GM10248 (cell line): ENCODE measurements at regions of chr4 and their contacts with region 1.

Region 1: GRCh38 chr4:6873792-6874461 is 35.7 kb upstream of the TBC1D14 start:
- DNase-seq: peak; percentile 76
- CTCF ChIP-seq: peak; percentile 87

Region 2: DNA sequence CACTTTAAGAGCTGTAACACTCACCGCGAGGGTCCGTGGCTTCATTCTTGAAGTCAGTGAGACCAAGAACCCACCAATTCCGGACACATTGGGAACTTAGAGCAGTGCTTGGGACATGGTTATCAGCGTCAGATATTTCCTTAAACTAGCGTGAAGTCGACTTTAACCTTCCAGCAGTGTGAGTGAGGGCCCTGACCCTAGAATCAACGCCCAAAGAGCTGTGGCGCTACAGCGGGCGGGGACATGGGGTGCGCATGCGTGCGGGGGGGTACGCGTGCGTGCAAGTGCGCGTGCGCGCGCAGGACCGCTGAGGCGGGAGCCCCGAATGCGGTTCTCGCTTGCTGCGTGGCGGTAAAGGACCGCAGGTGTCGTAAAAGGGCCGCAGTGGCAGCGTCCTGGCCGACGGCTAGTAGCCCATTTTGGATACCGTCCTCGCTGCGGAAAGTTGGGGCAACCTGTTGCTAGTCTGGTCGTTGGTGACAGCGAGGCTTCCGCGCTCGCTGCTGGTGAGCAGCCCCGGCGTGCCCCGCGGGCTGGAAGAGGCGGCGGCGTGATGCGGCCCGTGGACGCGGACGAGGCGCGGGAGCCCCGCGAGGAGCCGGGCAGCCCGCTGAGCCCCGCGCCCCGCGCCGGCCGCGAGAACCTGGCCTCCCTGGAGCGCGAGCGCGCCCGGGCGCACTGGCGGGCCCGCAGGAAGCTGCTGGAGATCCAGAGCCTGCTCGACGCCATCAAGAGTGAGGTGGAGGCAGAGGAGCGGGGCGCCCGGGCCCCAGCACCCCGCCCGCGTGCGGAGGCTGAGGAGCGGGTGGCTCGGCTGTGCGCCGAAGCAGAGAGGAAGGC is 200.0 kb before region 1 on chr4:
- CTCF ChIA-PET with region 1: interaction called, 26 read pairs
- POLR2A ChIA-PET with region 1: no interaction called
- DNase-seq: peak; percentile 97
- CTCF ChIP-seq: no peak

Region 3: DNA sequence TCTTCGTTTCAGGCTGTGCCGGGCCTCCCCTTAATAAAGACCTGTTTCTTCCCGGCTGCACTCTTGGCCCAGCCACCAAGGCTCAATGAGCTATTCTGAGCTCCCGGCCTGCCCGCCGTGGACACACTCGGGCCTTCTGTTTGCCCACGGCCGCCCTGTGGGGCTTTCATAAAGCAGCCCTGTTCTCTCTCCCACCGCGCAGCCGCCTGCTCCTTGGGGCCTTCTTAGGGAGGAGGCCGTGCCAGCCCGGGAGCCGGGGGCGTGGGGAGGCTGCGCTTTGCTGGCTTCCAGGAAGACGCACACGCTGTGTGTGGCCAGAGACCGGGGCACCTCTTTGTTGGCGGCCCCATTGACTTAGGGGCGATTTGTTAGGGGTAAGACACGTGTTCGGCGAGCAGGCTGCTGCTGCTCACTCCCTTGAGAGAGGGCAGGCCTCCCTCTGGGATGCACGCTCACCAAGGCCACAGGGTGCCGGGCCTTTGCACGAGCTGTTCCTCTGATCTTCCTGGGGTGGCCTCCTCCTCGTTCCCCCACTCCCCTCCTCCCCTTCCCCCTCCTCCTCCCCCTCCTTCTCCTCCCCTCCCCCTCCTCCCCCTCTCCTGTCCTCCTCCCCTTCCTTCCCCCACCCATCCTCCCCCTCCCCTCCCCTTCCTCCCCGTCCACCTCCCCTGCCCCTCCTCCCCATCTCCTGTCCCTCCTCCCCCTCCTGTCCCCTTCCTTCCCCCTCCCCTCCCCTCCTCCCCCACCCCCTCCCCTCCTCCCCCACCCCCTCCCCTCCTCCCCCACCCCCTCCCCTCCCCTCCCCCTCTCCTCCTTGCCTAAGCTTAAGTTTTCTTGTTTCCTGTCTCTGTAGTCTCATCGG is 146.6 kb before region 1 on chr4:
- CTCF ChIA-PET with region 1: interaction called, 42 read pairs
- POLR2A ChIA-PET with region 1: no interaction called
- DNase-seq: no peak
- CTCF ChIP-seq: no peak

Region 4: DNA sequence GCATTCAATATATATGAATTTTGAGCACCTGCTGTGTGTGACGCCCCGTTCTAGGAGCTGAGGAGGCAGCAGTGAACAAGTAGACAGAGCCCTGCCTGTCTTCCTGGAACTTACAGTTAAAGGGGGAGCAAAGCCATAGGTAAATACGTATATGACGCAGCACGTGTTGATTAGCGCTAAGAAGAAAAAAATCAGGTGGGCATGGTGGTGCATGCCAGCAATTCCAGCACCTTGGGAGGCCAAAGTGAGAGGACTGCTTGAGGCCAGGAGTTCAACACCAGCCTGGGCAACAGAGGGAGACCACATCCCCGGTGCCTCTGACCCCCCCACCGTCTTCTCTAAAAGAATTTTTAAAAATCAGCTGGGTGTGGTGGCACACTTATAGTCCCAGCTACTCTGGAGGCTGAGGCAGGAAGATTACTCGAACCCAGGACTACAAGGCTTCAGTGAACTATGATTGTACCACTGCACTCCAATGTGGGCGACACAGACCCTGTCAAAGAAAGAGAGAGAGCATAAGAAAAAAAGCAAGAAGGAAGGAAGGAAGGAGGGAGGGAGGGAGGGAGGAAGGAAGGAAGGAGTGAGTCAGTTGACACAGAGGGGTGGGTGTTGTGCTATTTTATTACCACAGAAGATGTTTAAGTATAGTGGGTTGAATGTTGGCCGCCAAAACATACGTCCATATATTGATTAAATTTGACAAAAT is 96.8 kb before region 1 on chr4:
- CTCF ChIA-PET with region 1: interaction called, 35 read pairs
- POLR2A ChIA-PET with region 1: no interaction called
- DNase-seq: no peak
- CTCF ChIP-seq: no peak

Region 5: DNA sequence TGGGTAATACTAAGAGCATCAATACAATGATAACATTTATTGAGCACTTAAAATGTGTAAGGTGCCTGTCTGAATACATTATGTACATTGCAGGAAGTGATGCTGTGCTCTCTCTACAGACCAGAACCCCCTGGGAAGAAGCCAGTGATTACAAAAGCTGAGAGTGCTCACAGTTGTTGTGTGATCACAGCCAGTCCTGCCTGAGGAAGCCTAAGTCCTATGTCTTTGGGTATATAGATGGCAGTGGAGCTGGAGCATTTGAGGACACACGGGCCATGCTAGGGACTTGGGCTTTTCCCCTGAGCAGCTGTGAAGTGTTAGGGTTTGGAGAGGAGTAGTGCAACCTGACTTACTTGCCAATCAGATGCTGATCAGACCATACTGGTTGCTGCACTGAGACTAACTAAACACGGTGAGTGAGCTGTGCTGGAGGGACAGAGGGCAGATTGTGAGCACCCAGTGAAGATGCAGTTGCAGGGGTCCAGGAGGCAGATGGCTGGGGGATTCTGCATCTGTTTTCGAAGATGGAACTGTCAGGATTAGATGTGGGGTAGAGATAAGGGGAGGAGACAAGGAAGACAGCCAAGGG is 25.1 kb before region 1 on chr4:
- CTCF ChIA-PET with region 1: interaction called, 22 read pairs
- POLR2A ChIA-PET with region 1: no interaction called
- DNase-seq: no peak
- CTCF ChIP-seq: no peak

Region 6: GRCh38 chr4:6902318-6903042 is 28.6 kb after region 1 on chr4:
- CTCF ChIA-PET with region 1: interaction called, 19 read pairs
- POLR2A ChIA-PET with region 1: no interaction called
- DNase-seq: no peak
- CTCF ChIP-seq: no peak

Region 7: GRCh38 chr4:7067452-7068278 is 193.7 kb after region 1 on chr4 and contains the start of gene GRPEL1:
- CTCF ChIA-PET with region 1: interaction called, 23 read pairs
- POLR2A ChIA-PET with region 1: no interaction called
- DNase-seq: peak; percentile 98
- CTCF ChIP-seq: no peak

Region 8: DNA sequence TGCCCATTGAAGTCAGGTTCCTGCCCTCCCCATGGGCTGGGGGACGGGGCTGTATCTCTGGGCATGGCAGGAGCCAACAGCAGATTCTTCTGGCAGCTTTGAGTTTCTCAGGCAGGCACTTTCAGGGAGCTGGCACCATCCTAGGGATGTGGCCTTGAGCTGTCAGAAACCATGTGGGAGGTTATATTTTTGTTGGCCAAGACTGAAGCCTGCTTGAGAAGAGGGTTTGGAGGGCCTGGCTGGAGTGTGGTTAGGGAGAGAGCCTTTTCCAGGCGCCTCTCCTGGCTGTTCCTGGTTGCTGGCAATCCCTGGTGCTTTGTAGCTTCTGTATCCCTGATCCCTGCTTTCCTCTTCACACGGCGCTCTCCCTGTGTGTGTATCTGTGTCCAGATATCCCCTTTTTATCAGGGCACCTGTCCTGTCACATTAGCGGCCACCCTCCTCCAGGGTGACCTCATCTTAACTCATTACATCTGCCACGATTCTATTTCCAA is 287.8 kb after region 1 on chr4:
- CTCF ChIA-PET with region 1: no interaction called
- POLR2A ChIA-PET with region 1: no interaction called
- DNase-seq: no peak
- CTCF ChIP-seq: no peak